Gastrocnemius medialis (tissue), 4 donors: ENCODE measurements at regions of chr15 and their contacts with region 1.

Region 1: DNA sequence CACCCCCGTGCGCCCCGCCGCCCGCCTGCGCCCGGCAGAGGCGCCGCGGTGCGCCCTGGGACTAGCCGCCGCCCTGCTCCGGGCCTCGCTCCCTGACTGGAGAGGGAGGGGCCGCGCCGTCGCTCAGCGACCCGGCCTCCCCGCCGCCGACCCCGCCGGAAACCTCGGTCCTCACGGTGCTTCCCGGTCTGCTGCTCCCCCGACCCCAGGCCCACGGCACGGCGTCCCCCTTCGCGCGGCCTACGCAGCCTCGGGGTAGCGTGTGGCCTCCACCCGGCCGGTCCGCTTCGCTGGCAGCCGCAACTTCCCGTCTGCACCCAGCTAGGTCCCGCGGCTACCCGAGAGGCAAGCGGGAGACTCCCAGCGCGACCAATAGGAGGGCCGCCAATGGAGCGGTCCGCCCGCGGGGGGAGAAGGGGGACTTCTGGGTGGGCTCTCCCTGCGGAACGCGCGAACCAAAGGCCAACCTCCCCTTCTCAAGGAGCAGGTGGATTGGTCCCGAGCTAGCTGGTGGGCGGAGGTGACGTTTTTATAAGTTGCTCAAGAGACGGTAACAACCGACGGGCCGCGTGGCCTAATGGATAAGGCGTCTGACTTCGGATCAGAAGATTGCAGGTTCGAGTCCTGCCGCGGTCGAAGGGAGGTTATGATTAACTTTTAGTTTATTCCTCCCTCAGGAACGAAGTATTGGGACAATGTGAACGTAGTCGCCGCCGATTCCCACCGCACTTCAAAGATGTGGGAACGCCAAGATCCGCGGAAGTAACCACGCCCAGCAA is at the start of gene POLG:
- DNase-seq: peak; percentile 98 to 99
- ATAC-seq: peak; percentile 96 to 97
- H3K4me3 ChIP-seq: peak within 1 kb of the TSS; percentile 76 to 96 (median 90)
- H3K27ac ChIP-seq: peak within 1 kb of the TSS; percentile 85 to 98 (median 91)
- H3K4me1 ChIP-seq: peaks cover 22 to 45% of the 10 kb centered on the region in 2 donors
- H3K27me3 ChIP-seq: no peaks in the 10 kb centered on the region
- CTCF ChIP-seq: peak in 2 of 5 experiments; percentile 18 to 21
- POLR2A ChIP-seq: peak; percentile 92 to 95
- total RNA-seq, gene POLG: 50.9 to 81.9 (median 61.4) TPM

Region 2: DNA sequence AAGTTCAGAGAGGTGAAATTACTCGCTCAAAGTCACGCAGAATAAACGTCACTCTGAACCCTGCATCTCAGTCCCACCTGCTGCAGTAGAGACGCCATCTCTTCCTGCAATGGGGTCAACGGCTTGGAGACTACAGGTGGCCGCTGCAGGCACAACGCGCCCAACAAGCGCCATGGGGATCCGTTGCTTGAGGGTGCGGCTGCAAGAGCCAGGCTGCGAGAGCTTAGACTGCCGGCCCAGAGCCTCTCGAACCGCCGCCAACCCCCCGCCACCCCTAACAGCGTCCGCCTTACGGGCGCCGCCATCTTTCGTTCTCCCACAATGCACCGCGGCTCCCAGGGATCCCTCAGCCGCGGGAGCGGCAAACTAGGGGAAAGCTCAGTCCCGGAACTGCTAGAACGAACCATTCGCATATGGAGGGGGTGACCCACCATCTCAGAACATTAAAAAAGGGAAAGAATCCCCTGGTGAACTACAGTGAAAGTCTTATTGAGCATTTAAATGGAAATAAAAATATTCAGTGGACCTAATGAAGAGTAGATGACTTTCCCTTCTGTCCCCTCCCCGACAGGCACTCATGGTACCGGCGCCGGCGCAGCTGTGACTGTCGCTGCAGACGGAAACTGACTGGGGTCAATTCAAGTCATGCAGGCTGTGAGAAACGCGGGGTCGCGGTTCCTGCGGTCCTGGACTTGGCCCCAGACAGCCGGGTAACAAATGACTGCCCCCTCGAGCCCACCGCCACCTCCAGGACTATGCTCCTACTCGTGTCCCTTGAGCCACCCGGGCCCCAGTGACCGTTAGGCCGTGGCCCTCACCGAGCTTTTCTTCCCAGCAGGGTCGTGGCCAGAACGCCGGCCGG is 867.4 kb before region 1 on chr15 and contains the starts of genes MRPL46 and MRPS11:
- in situ Hi-C with region 1: no loop called
- intact Hi-C with region 1: loop called (anchors 2 kb)
- DNase-seq: peak; percentile 76 to 83
- ATAC-seq: peak; percentile 98
- H3K4me3 ChIP-seq: peak within 1 kb of the TSS; percentile 87 to 99 (median 94)
- H3K27ac ChIP-seq: peak within 1 kb of the TSS; percentile 90 to 98 (median 94)
- H3K4me1 ChIP-seq: peaks cover 28 to 34% of the 10 kb centered on the region in 2 donors
- H3K27me3 ChIP-seq: no peaks in the 10 kb centered on the region
- CTCF ChIP-seq: no peak
- POLR2A ChIP-seq: peak; percentile 17 to 44
- total RNA-seq, gene MRPL46: 36.2 to 48.9 (median 44.6) TPM
- total RNA-seq, gene MRPS11: 33.5 to 47.8 (median 45.2) TPM

Region 3: GRCh38 chr15:88620995-88621772 is 713.5 kb before region 1 on chr15 and contains the start of gene AEN:
- in situ Hi-C with region 1: no loop called
- intact Hi-C with region 1: loop called (anchors 5 kb)
- DNase-seq: peak; percentile 94 to 96
- ATAC-seq: peak; percentile 99
- H3K4me3 ChIP-seq: peak within 1 kb of the TSS; percentile 74 to 99 (median 88)
- H3K27ac ChIP-seq: peak within 1 kb of the TSS; percentile 80 to 88 (median 86)
- H3K4me1 ChIP-seq: peaks cover 14 to 31% of the 10 kb centered on the region in 2 donors
- H3K27me3 ChIP-seq: no peaks in the 10 kb centered on the region
- CTCF ChIP-seq: no peak
- POLR2A ChIP-seq: peak; percentile 54 to 69
- total RNA-seq, gene AEN: 16.1 to 19.2 (median 17.3) TPM

Region 4: GRCh38 chr15:88904624-88905327 is 429.9 kb before region 1 on chr15:
- in situ Hi-C with region 1: no loop called
- intact Hi-C with region 1: loop called (anchors 5 kb)
- DNase-seq: peak; percentile 66 to 75
- ATAC-seq: peak; percentile 65 to 69
- H3K4me3 ChIP-seq: no peak overlapping the region
- H3K27ac ChIP-seq: peak overlapping the region; percentile 76 to 99 (median 94)
- H3K4me1 ChIP-seq: peaks cover 50 to 55% of the 10 kb centered on the region in 2 donors
- H3K27me3 ChIP-seq: no peaks in the 10 kb centered on the region
- CTCF ChIP-seq: peak; percentile 94 to 99 (median 97)
- POLR2A ChIP-seq: no peak

Region 5: DNA sequence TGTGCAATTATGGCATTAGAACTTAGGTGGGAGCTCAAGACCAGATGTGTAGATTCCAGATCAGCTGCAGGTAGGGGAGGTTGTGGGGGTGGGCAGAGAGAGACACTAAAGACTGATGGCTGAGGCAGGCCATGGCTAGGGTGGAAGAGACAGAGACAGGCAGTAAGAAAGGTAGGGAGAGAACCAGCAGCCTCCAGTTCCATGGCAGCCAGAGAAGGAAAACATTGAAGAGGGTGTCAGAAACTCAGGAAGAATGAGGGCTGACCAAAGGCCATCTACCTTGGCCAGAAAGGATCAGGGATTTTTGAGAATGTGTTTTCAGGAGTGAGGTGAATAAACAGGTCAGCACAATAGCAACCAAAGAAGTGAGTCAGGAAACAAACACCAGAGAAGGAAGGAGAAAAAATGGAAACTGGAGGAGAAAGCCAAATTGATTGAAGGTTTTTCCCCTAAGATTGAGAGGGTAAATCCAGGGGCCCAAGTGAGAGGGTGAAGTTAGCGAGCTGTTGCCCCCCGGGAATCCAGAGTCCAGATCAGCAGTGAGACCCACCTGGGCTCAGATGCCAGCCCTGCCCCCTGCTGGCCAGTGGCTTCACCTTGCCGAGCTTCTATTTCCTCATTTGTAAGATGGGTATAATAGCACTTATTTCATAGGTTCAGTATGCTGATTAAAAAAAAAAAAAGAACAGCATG is 205.4 kb before region 1 on chr15:
- in situ Hi-C with region 1: no loop called
- intact Hi-C with region 1: loop called (anchors 5 kb)
- DNase-seq: peak in 1 of 2 donors; percentile 56
- ATAC-seq: no peak
- H3K4me3 ChIP-seq: no peak overlapping the region
- H3K27ac ChIP-seq: peak overlapping the region; percentile 61 to 81 (median 78)
- H3K4me1 ChIP-seq: peaks cover 48 to 77% of the 10 kb centered on the region in 2 donors
- H3K27me3 ChIP-seq: no peaks in the 10 kb centered on the region
- CTCF ChIP-seq: peak; percentile 37 to 80 (median 71)
- POLR2A ChIP-seq: no peak

Region 6: GRCh38 chr15:89243691-89244471 is 90.8 kb before region 1 on chr15 and contains the start of gene FANCI:
- in situ Hi-C with region 1: no loop called
- intact Hi-C with region 1: loop called (anchors 2 kb)
- DNase-seq: peak; percentile 89 to 93
- ATAC-seq: peak; percentile 96 to 97
- H3K4me3 ChIP-seq: peak within 1 kb of the TSS; percentile 75 to 88 (median 76)
- H3K27ac ChIP-seq: peak within 1 kb of the TSS; percentile 66 to 82 (median 72)
- H3K4me1 ChIP-seq: peaks cover 8 to 15% of the 10 kb centered on the region in 2 donors
- H3K27me3 ChIP-seq: no peaks in the 10 kb centered on the region
- CTCF ChIP-seq: peak; percentile 12 to 55 (median 34)
- POLR2A ChIP-seq: peak in 1 of 2 donors; percentile 27
- total RNA-seq, gene FANCI: 0.80 to 3.3 (median 2.7) TPM

Region 7: GRCh38 chr15:89690276-89691218 is 355.8 kb after region 1 on chr15 and contains the starts of genes PEX11A and WDR93:
- in situ Hi-C with region 1: no loop called
- intact Hi-C with region 1: no loop called
- DNase-seq: peak; percentile 70 to 78
- ATAC-seq: peak; percentile 92 to 93
- H3K4me3 ChIP-seq: peak within 1 kb of the TSS; percentile 65 to 93 (median 90)
- H3K27ac ChIP-seq: peak within 1 kb of the TSS; percentile 76 to 80 (median 79)
- H3K4me1 ChIP-seq: peaks cover 12% of the 10 kb centered on the region in 2 donors
- H3K27me3 ChIP-seq: no peaks in the 10 kb centered on the region
- CTCF ChIP-seq: no peak
- POLR2A ChIP-seq: peak; percentile 51 to 65
- total RNA-seq, gene PEX11A: 10.0 to 46.4 (median 21.8) TPM
- total RNA-seq, gene WDR93: not detected

Region 8: DNA sequence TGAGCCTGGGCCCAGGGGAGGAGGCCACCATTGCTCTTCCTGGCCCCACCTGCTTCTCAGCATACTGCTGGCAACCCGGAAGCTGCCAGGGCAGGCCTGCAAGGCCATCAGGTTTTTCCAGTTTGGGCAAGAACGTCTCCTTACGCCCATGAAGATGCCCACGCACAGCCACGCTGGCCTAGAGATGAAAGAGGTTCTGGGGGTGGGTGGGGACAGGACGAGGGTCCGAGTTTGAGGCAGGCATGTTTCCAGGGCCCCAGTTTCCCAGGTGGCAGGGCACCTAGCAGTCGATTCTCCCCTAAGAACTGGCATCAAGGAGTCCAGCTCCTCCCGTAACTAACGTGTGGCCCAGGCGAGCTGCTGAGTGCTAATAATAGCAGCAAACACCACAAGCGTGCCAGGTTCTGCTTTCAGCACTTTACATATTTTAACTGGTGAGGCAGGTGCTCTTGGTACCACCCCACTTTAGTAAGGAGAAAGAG is 712.3 kb after region 1 on chr15:
- in situ Hi-C with region 1: no loop called
- intact Hi-C with region 1: no loop called
- DNase-seq: peak; percentile 77 to 86
- ATAC-seq: peak; percentile 82
- H3K4me3 ChIP-seq: no peak overlapping the region
- H3K27ac ChIP-seq: peak overlapping the region; percentile 67 to 81 (median 76)
- H3K4me1 ChIP-seq: peaks cover 33 to 34% of the 10 kb centered on the region in 2 donors
- H3K27me3 ChIP-seq: no peaks in the 10 kb centered on the region
- CTCF ChIP-seq: no peak
- POLR2A ChIP-seq: peak in 1 of 2 donors; percentile 30

Region 9: DNA sequence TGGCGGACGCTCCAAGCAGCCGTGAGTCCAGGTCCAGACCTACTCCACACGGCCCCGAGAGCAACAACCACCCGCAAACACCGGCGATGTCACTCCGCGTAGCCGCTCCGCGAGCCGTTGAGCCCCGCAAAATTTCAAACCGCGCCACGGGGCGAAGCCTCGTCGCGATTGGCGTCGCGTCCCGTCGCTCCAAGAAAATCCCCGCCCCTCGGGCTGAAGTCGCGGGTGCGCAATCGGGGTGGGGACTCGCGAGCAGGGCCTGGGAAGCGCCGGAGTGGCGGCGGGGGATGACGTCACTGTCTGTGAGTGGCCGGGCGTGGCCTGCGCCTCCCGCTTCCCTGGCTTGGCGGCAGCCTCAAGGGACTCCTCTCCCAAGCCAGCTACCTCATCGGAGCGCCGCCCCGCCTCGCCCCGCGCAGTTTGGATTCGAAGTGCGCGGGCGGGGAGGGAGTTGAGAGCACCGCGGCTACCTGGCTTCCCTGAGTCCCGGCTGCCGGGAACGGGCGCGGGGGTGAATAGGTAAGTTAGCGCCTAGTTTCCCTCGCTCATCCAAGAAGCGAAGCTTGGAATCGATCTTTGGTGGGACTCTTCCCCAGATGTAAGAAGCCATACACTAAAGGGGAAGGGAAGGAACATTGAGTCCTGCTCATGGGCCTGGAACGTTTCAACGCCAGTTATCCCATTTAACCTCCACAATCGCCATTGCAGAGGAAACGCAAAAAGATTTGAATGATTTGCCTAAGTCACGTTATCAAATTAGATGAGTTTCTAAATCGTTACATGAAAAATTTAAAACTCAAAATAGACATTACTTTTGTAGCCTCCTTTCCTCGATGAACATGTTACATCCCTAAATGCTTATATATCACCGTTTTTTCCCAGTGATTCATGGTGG is 1660.0 kb after region 1 on chr15 and contains the start of gene PRC1:
- in situ Hi-C with region 1: no loop called
- intact Hi-C with region 1: loop called (anchors 10 kb)
- DNase-seq: peak; percentile 97 to 98
- ATAC-seq: peak; percentile 98
- H3K4me3 ChIP-seq: peak within 1 kb of the TSS; percentile 77 to 99 (median 87)
- H3K27ac ChIP-seq: peak within 1 kb of the TSS; percentile 75 to 86 (median 82)
- H3K4me1 ChIP-seq: peaks cover 0 to 13% of the 10 kb centered on the region in 2 donors
- H3K27me3 ChIP-seq: no peaks in the 10 kb centered on the region
- CTCF ChIP-seq: no peak
- POLR2A ChIP-seq: peak; percentile 48 to 68
- total RNA-seq, gene PRC1: 1.4 to 9.9 (median 4.9) TPM